Motor neuron (in vitro differentiated cells): ENCODE measurements at regions of chr3 and their contacts with region 1.

Region 1: GRCh38 chr3:3179407-3180094 is at the start of gene CRBN:
- ATAC-seq: peak; percentile 91 to 99 (median 98)
- H3K4me3 ChIP-seq: peak within 1 kb of the TSS; percentile 89 to 95 (median 94)
- H3K27ac ChIP-seq: peak within 1 kb of the TSS; percentile 52 to 86
- H3K4me1 ChIP-seq: peaks cover 9 to 10% of the 10 kb centered on the region in 2 donors
- total RNA-seq, gene CRBN: 38.8 to 71.9 (median 52.3) TPM

Region 2: DNA sequence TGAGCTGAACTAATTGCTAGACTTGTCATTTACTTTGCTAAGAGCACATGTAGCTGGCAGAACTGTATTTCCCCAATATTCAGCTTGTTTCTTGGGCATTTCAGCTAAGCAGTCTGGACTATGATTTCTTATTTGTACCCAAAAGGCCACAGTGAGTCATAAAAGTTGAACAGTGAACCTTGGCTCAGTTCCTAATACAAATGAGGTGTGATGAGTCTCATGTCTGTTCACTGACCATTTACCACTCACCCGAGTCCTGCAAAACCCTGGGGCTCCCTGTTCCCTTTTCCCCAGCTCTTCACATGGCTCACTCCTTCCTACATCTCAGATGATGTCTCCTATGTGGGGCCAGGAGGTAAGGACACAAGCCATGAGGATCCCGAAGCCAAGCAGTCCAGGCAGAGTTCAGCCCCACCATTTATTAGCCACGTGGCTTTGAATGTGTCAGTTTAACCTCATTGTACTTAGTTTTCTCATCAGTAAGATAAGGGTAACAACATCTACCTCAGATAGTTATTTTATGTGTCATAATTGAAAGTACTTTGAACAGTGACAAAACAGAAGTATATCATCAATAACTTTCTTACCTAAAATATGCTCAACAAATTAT is 308.7 kb before region 1 on chr3:
- in situ Hi-C with region 1: no loop called
- ATAC-seq: peak in 1 of 8 experiments; percentile 10
- H3K4me3 ChIP-seq: no peak overlapping the region
- H3K27ac ChIP-seq: no peak overlapping the region
- H3K4me1 ChIP-seq: no peaks in the 10 kb centered on the region

Region 3: DNA sequence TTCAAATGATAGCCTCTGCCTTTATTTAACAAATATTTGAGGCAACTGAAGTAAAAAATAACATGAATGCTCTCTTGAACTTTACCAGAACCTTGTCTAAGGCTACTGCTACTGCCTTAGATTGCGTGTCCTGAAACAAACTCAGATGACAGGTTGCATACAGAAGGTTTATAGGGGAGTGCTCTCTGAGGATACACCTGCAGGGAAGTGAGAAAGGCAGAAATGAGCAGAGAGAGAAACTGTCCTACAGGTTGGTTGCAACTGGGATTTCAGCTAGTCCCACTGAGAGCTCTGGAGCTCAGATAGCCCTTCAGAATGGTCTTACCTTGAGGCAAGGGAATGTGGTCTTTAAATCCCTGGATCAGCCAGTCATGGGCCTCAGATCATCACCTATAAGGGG is 234.9 kb before region 1 on chr3:
- in situ Hi-C with region 1: no loop called
- ATAC-seq: no peak
- H3K4me3 ChIP-seq: no peak overlapping the region
- H3K27ac ChIP-seq: no peak overlapping the region
- H3K4me1 ChIP-seq: no peaks in the 10 kb centered on the region

Region 4: DNA sequence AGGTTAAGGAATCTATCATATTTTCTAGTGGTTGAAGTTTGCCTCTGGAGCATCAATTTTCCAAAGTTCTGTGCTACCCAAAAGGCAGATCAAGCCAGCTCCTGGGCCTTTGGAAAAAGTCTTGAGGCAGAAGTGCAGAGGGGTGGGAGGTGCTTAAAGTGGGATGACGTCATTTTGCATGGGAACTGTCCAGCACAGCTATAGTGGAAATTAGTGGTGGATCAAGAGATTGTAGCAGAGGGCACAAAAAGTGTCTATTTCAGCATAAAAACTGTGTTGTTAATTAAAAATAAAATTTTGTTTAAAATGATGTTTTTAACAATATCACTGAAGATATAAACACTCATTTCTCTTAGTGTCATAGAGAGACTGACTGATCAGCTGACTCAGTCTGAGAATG is 841.6 kb after region 1 on chr3:
- in situ Hi-C with region 1: loop called in 1 of 9 experiments (anchors 25 kb)
- ATAC-seq: peak in 2 of 8 experiments; percentile 36 to 50
- H3K4me3 ChIP-seq: no peak overlapping the region
- H3K27ac ChIP-seq: no peak overlapping the region
- H3K4me1 ChIP-seq: no peaks in the 10 kb centered on the region

Region 5: DNA sequence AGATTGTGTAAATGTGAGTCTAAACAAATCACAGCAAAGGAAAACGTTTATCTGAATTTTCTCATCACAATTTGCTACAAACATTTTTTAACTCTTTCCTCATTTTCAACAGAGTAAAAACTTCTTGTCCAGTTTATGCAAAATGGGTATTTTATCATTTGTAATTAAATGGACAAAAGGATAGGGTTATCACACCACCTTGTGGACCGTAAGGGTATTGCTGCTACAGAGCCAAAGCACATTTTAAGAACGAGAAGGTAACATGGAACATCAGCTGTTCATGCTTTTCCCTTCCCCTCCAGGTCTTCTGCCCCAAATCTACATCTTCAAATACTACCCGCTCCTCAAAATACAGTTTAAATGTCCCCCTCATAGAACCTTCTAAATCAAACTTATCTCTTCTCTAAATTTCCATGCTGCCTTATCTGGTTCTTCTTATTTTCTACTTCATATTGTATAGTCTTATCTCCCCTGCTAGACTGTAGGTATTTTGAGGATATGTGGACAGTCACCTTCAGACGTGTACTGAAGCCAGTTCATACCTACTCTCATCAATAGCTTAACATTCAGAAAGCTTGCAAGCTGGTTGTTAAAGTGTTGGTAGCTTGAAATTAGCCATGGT is 1110.8 kb after region 1 on chr3:
- in situ Hi-C with region 1: loop called in 4 of 9 experiments (anchors 25 kb)
- ATAC-seq: peak in 2 of 8 experiments; percentile 27 to 32
- H3K4me3 ChIP-seq: no peak overlapping the region
- H3K27ac ChIP-seq: no peak overlapping the region
- H3K4me1 ChIP-seq: peaks cover 17 to 26% of the 10 kb centered on the region in 2 donors

Region 6: GRCh38 chr3:4551051-4551711 is 1371.6 kb after region 1 on chr3:
- in situ Hi-C with region 1: no loop called
- ATAC-seq: no peak
- H3K4me3 ChIP-seq: no peak overlapping the region
- H3K27ac ChIP-seq: no peak overlapping the region
- H3K4me1 ChIP-seq: peaks cover 0 to 14% of the 10 kb centered on the region in 2 donors